ENCODE measurements at regions of chr1 and their contacts with region 1.

Region 1: DNA sequence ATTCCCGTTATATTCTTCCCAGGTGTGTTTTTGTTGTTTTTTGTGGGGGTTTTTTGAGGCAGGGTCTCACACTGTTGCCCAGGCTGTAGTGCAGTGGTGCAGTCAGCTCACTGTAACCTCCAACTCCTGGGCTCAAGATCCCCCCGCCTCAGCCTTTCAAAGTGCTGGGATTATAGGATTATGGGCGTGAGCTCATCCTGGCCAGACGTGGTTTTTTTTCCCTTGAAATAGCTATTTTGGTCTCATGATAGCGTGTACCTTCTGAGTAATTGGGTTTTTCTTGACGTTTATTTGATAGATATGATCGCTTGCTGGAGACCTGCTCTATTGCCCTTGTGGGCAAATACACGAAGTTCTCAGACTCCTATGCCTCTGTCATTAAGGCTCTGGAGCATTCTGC is 17.6 kb downstream of the CTPS1 start:
- DNase-seq: no peak

Region 2: GRCh38 chr1:40982721-40983120 is 14.4 kb before region 1 on chr1:
- intact Hi-C with region 1: loop called in 1 of 2 experiments (anchors 1 kb)
- DNase-seq: no peak

Region 3: GRCh38 chr1:41122851-41123507 is 125.9 kb after region 1 on chr1:
- intact Hi-C with region 1: no loop called
- DNase-seq: no peak